ENCODE measurements at regions of chr3 and their contacts with region 1.

Region 1: DNA sequence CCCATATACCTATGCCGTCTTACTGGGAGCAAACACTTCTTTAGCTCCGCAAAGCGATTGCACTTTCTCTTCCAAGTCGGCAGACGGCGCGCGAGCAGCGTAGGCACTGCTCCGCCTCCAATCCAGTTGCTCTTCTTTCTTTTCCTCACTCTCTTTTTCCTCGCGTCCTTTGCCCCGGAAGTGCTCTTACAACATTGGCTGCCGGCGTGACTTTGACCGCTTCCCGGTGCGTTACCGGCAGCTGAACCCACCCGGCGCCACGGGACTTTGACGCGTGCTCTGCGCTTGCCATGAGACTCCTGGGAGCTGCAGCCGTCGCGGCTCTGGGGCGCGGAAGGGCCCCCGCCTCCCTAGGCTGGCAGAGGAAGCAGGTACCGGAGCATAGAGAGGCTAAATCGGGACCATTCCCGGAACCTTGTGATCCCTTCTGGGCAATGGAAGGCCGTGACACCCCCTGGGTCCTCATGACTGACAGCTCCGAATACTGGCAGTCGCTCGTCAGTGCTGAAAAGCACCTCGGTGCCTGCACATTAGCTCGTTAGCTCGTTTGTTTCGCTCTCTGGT is at the start of gene GFM1:
- DNase-seq: peak; percentile 96
- ATAC-seq: peak; percentile 94
- H3K4me3 ChIP-seq: peak within 1 kb of the TSS; percentile 90 to 93 (median 93)
- H3K27ac ChIP-seq: peak within 1 kb of the TSS; percentile 85
- H3K4me1 ChIP-seq: peaks cover 26% of the 10 kb centered on the region
- H3K27me3 ChIP-seq: no peaks in the 10 kb centered on the region; a peak in 1 of 5 replicates
- CTCF ChIP-seq: peak; percentile 98
- EP300 ChIP-seq: peak in 1 of 2 experiments; percentile 58; a peak in 2 of 4 replicates
- POLR2A ChIP-seq: peak; percentile 75 to 81
- RAD21 ChIP-seq: peak; percentile 69; the same call in 1 of the 2 replicates
- total RNA-seq, gene GFM1: 37.8 and 59.0 TPM in 2 replicates

Region 2: GRCh38 chr3:157515398-157515797 is 1129.0 kb before region 1 on chr3:
- CTCF ChIA-PET with region 1: no interaction called
- POLR2A ChIA-PET with region 1: no interaction called
- in situ Hi-C with region 1: no loop called
- intact Hi-C with region 1: no loop called
- DNase-seq: no peak
- ATAC-seq: no peak
- H3K4me3 ChIP-seq: no peak overlapping the region
- H3K27ac ChIP-seq: no peak overlapping the region
- H3K4me1 ChIP-seq: no peaks in the 10 kb centered on the region
- H3K27me3 ChIP-seq: no peaks in the 10 kb centered on the region
- CTCF ChIP-seq: no peak
- EP300 ChIP-seq: no peak
- POLR2A ChIP-seq: no peak
- RAD21 ChIP-seq: no peak

Region 3: GRCh38 chr3:157618075-157618760 is 1026.2 kb before region 1 on chr3:
- CTCF ChIA-PET with region 1: no interaction called
- POLR2A ChIA-PET with region 1: no interaction called
- in situ Hi-C with region 1: no loop called
- intact Hi-C with region 1: loop called (anchors 10 kb)
- DNase-seq: peak; percentile 41
- ATAC-seq: peak; percentile 46; the same call in 2 of the 3 replicates
- H3K4me3 ChIP-seq: no peak overlapping the region
- H3K27ac ChIP-seq: no peak overlapping the region
- H3K4me1 ChIP-seq: no peaks in the 10 kb centered on the region
- H3K27me3 ChIP-seq: no peaks in the 10 kb centered on the region; a peak in 2 of 5 replicates
- CTCF ChIP-seq: peak; percentile 63
- EP300 ChIP-seq: no peak
- POLR2A ChIP-seq: no peak
- RAD21 ChIP-seq: no peak

Region 4: DNA sequence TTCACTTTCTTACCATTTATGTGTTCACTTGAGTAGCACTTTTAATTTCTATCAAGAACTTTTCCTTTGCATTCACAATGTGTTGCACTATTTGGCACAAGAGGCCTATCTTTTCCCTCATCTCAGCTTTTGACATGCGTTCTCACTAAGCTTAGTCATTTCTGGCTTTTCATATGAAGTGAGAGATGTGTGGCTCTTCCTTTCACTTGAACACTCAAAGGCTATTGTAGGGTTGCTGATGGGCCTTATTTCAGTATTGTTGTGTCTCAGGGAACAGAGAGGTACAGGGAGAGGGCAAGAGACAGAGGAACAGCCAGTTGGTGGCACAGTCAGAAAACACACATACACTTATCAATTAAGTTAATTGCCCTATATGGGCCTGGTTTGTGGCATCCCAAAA is 200.8 kb before region 1 on chr3:
- CTCF ChIA-PET with region 1: no interaction called
- POLR2A ChIA-PET with region 1: no interaction called
- in situ Hi-C with region 1: no loop called
- intact Hi-C with region 1: no loop called
- DNase-seq: no peak
- ATAC-seq: no peak
- H3K4me3 ChIP-seq: no peak overlapping the region
- H3K27ac ChIP-seq: no peak overlapping the region
- H3K4me1 ChIP-seq: no peaks in the 10 kb centered on the region
- H3K27me3 ChIP-seq: no peaks in the 10 kb centered on the region
- CTCF ChIP-seq: no peak
- EP300 ChIP-seq: no peak
- POLR2A ChIP-seq: no peak
- RAD21 ChIP-seq: no peak

Region 5: GRCh38 chr3:158539414-158540014 is 104.9 kb before region 1 on chr3:
- CTCF ChIA-PET with region 1: interaction called, 5 read pairs
- POLR2A ChIA-PET with region 1: no interaction called
- in situ Hi-C with region 1: loop called (anchors 5 kb)
- intact Hi-C with region 1: loop called (anchors 5 kb)
- DNase-seq: peak; percentile 46
- ATAC-seq: peak; percentile 66
- H3K4me3 ChIP-seq: no peak overlapping the region
- H3K27ac ChIP-seq: no peak overlapping the region
- H3K4me1 ChIP-seq: no peaks in the 10 kb centered on the region
- H3K27me3 ChIP-seq: no peaks in the 10 kb centered on the region
- CTCF ChIP-seq: peak; percentile 62
- EP300 ChIP-seq: no peak
- POLR2A ChIP-seq: no peak
- RAD21 ChIP-seq: peak; percentile 21; the same call in 1 of the 2 replicates

Region 6: DNA sequence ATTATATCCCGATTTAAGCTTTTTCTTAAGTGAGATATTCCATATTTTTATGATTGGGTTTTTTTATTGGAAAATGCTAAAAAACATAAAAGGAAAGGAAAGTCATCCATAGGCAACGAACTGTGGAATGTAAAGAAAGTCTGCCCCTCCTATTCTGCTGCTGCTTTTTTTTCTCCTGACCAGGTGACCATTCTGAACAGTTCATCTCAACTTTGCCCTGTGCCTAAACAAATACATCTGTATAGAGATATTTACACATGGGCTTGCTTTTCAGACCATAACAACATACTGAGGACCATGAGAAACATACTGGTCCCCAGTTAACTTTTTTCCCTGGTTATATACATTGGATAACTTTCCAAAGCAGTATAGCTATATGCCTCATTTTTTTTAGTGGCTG is 92.3 kb before region 1 on chr3:
- CTCF ChIA-PET with region 1: no interaction called
- POLR2A ChIA-PET with region 1: no interaction called
- in situ Hi-C with region 1: no loop called
- intact Hi-C with region 1: loop called (anchors 5 kb)
- DNase-seq: peak; percentile 74
- ATAC-seq: peak; percentile 99
- H3K4me3 ChIP-seq: no peak overlapping the region
- H3K27ac ChIP-seq: no peak overlapping the region
- H3K4me1 ChIP-seq: peaks cover 7% of the 10 kb centered on the region
- H3K27me3 ChIP-seq: no peaks in the 10 kb centered on the region
- CTCF ChIP-seq: no peak
- EP300 ChIP-seq: peak in 1 of 2 experiments; percentile 35; a peak in 1 of 4 replicates
- POLR2A ChIP-seq: no peak
- RAD21 ChIP-seq: no peak

Region 7: DNA sequence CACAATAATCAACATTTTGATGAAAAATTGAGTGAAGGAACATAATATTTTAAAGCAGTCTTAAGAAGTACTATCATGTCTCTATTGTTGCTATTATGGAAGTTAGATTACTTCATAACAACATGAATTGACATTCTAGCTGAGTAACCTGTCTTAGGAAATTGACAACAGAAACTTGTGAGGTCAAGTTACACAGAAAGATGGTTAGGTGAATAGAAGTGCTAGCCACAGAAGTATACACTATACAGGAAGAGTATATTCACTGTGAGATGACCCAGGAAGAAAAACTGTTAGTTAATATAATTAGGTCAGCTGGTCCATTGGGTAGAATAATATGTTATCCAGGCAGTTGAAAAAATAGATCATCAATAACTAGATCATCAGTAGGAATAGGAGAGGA is 42.2 kb before region 1 on chr3:
- CTCF ChIA-PET with region 1: no interaction called
- POLR2A ChIA-PET with region 1: no interaction called
- in situ Hi-C with region 1: no loop called
- intact Hi-C with region 1: no loop called
- DNase-seq: no peak
- ATAC-seq: no peak
- H3K4me3 ChIP-seq: no peak overlapping the region
- H3K27ac ChIP-seq: no peak overlapping the region
- H3K4me1 ChIP-seq: no peaks in the 10 kb centered on the region
- H3K27me3 ChIP-seq: no peaks in the 10 kb centered on the region
- CTCF ChIP-seq: no peak
- EP300 ChIP-seq: no peak
- POLR2A ChIP-seq: no peak
- RAD21 ChIP-seq: no peak

Region 8: GRCh38 chr3:158777161-158777873 is 132.9 kb after region 1 on chr3:
- CTCF ChIA-PET with region 1: no interaction called
- POLR2A ChIA-PET with region 1: no interaction called
- in situ Hi-C with region 1: no loop called
- intact Hi-C with region 1: no loop called
- DNase-seq: no peak
- ATAC-seq: no peak
- H3K4me3 ChIP-seq: no peak overlapping the region
- H3K27ac ChIP-seq: no peak overlapping the region
- H3K4me1 ChIP-seq: peaks cover 18% of the 10 kb centered on the region
- H3K27me3 ChIP-seq: no peaks in the 10 kb centered on the region
- CTCF ChIP-seq: no peak
- EP300 ChIP-seq: no peak
- POLR2A ChIP-seq: no peak
- RAD21 ChIP-seq: no peak

Region 9: GRCh38 chr3:158801696-158802408 is 157.4 kb after region 1 on chr3 and contains the start of gene MFSD1:
- CTCF ChIA-PET with region 1: no interaction called
- POLR2A ChIA-PET with region 1: interaction called, 3 read pairs
- in situ Hi-C with region 1: no loop called
- intact Hi-C with region 1: loop called (anchors 5 kb)
- DNase-seq: peak; percentile 80
- ATAC-seq: peak; percentile 96
- H3K4me3 ChIP-seq: peak within 1 kb of the TSS; percentile 67 to 92 (median 84)
- H3K27ac ChIP-seq: peak within 1 kb of the TSS; percentile 43
- H3K4me1 ChIP-seq: peaks cover 23% of the 10 kb centered on the region
- H3K27me3 ChIP-seq: no peaks in the 10 kb centered on the region
- CTCF ChIP-seq: no peak; the same call in 1 of the 2 replicates
- EP300 ChIP-seq: no peak
- POLR2A ChIP-seq: peak; percentile 72 to 88
- RAD21 ChIP-seq: peak; percentile 23; the same call in 1 of the 2 replicates
- total RNA-seq, gene MFSD1: 22.2 and 37.9 TPM in 2 replicates

Measured in HepG2 (cell line).